B cell (primary cell): ENCODE measurements at regions of chr5 and their contacts with region 1.

Region 1: GRCh38 chr5:158174918-158175851 is 316.2 kb upstream of the CLINT1 start:
- DNase-seq: peak; percentile 82
- ATAC-seq: peak; percentile 88
- H3K4me3 ChIP-seq: no peak overlapping the region
- H3K4me3 Mint-ChIP-seq: no peak overlapping the region
- H3K27ac ChIP-seq: no peak overlapping the region
- H3K27ac Mint-ChIP-seq: no peak overlapping the region
- H3K4me1 ChIP-seq: peaks cover 22 to 34% of the 10 kb centered on the region in 2 donors
- H3K4me1 Mint-ChIP-seq: peaks cover 30% of the 10 kb centered on the region
- H3K27me3 ChIP-seq: no peaks in the 10 kb centered on the region
- H3K27me3 Mint-ChIP-seq: no peaks in the 10 kb centered on the region
- CTCF ChIP-seq: peak; percentile 82

Region 2: GRCh38 chr5:158074992-158075769 is 100.0 kb before region 1 on chr5:
- CTCF ChIA-PET with region 1: interaction called, 26 read pairs
- POLR2A ChIA-PET with region 1: no interaction called
- intact Hi-C with region 1: no loop called
- DNase-seq: peak; percentile 78
- ATAC-seq: peak; percentile 90
- H3K4me3 ChIP-seq: peak overlapping the region in 2 of 5 experiments; percentile 10 to 20
- H3K4me3 Mint-ChIP-seq: peak overlapping the region; percentile 12
- H3K27ac ChIP-seq: no peak overlapping the region
- H3K27ac Mint-ChIP-seq: peak overlapping the region; percentile 43
- H3K4me1 ChIP-seq: peaks cover 12 to 20% of the 10 kb centered on the region in 2 donors
- H3K4me1 Mint-ChIP-seq: peaks cover 21% of the 10 kb centered on the region
- H3K27me3 ChIP-seq: peaks cover 0 to 3% (median 0%) of the 10 kb centered on the region in 4 experiments
- H3K27me3 Mint-ChIP-seq: no peaks in the 10 kb centered on the region
- CTCF ChIP-seq: peak; percentile 82

Region 3: GRCh38 chr5:158629591-158630312 is 454.6 kb after region 1 on chr5:
- CTCF ChIA-PET with region 1: interaction called, 10 read pairs
- POLR2A ChIA-PET with region 1: no interaction called
- intact Hi-C with region 1: no loop called
- DNase-seq: no peak
- ATAC-seq: no peak
- H3K4me3 ChIP-seq: no peak overlapping the region
- H3K4me3 Mint-ChIP-seq: no peak overlapping the region
- H3K27ac ChIP-seq: no peak overlapping the region
- H3K27ac Mint-ChIP-seq: no peak overlapping the region
- H3K4me1 ChIP-seq: no peaks in the 10 kb centered on the region
- H3K4me1 Mint-ChIP-seq: no peaks in the 10 kb centered on the region
- H3K27me3 ChIP-seq: peaks cover 0 to 5% (median 1%) of the 10 kb centered on the region in 4 experiments
- H3K27me3 Mint-ChIP-seq: peaks cover 3% of the 10 kb centered on the region
- CTCF ChIP-seq: no peak

Region 4: DNA sequence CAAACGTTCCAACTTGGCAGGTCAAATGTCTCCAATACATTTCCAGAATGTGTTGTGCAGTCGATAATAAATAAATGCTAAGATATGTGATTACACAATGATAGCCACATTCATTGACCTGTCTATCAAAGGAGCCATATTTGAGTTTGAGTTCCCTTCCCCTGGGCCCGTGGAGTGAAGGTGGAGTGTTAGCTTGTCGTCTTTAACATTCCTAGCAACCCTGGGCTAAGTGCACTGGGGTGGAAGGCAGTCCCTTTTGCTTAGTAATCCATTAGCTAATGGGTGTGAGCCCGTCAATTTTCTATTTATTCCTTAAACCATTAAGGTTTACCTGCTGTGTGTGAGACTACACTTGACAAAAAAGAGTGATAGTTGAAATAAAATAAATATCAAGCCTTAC is 509.3 kb after region 1 on chr5:
- CTCF ChIA-PET with region 1: interaction called, 11 read pairs
- POLR2A ChIA-PET with region 1: no interaction called
- intact Hi-C with region 1: no loop called
- DNase-seq: no peak
- ATAC-seq: no peak
- H3K4me3 ChIP-seq: no peak overlapping the region
- H3K4me3 Mint-ChIP-seq: no peak overlapping the region
- H3K27ac ChIP-seq: no peak overlapping the region
- H3K27ac Mint-ChIP-seq: no peak overlapping the region
- H3K4me1 ChIP-seq: peaks cover 14 to 15% of the 10 kb centered on the region in 2 donors
- H3K4me1 Mint-ChIP-seq: peaks cover 18% of the 10 kb centered on the region
- H3K27me3 ChIP-seq: no peaks in the 10 kb centered on the region
- H3K27me3 Mint-ChIP-seq: no peaks in the 10 kb centered on the region
- CTCF ChIP-seq: no peak

Region 5: DNA sequence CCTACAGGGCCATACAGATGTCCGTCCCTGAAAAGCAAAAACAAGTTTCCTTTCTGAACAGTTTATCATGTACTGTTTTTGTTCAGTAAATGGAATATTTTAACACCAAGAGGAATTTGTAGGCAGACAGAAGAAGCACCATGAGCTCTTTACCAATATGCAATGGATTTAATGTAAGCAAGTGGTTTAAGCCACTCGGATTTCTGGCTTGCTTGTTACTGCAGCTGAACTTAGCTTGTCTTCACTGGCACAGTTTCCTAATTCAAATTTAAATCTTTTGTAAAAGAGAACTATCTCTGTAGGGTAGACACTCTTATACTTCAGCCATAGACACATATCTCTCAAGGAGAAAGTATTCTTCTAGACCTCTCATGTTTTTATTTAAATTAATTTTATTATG is 937.3 kb after region 1 on chr5:
- CTCF ChIA-PET with region 1: interaction called, 238 read pairs
- POLR2A ChIA-PET with region 1: no interaction called
- intact Hi-C with region 1: no loop called
- DNase-seq: no peak
- ATAC-seq: no peak
- H3K4me3 ChIP-seq: no peak overlapping the region
- H3K4me3 Mint-ChIP-seq: no peak overlapping the region
- H3K27ac ChIP-seq: no peak overlapping the region
- H3K27ac Mint-ChIP-seq: no peak overlapping the region
- H3K4me1 ChIP-seq: no peaks in the 10 kb centered on the region
- H3K4me1 Mint-ChIP-seq: no peaks in the 10 kb centered on the region
- H3K27me3 ChIP-seq: no peaks in the 10 kb centered on the region
- H3K27me3 Mint-ChIP-seq: no peaks in the 10 kb centered on the region
- CTCF ChIP-seq: no peak